ENCODE measurements at regions of chr18 and their contacts with region 1.

Region 1: DNA sequence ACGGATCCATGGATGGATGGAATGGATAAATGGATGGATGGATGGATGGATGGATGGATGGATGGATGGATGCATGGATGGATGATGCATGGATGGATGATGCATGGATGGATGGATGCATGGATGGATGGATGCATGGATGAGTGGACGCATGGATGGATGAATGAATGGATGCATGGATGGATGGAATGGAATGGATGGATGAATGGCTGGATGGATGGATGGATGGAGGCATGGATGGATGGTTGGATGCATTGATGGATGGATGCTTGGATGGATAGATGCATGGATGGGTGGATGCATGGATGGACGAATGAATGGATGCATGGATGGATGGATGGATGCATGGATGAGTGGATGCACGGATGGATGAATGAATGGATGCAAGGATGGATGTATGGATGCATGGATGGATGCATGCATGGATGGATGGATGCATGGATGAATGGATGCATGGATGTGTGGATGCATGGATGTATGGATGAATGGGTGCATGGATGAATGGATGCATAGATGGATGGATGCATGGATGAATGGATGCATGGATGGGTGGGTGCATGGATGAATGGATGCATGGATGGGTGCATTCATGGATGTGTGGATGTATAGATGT is 209.2 kb downstream of the ALPK2 start:
- DNase-seq: no peak
- H3K4me3 ChIP-seq: no peak overlapping the region
- H3K27ac ChIP-seq: no peak overlapping the region
- H3K4me1 ChIP-seq: no peaks in the 10 kb centered on the region
- H3K27me3 ChIP-seq: no peaks in the 10 kb centered on the region
- CTCF ChIP-seq: no peak
- EP300 ChIP-seq: no peak
- POLR2A ChIP-seq: no peak

Region 2: DNA sequence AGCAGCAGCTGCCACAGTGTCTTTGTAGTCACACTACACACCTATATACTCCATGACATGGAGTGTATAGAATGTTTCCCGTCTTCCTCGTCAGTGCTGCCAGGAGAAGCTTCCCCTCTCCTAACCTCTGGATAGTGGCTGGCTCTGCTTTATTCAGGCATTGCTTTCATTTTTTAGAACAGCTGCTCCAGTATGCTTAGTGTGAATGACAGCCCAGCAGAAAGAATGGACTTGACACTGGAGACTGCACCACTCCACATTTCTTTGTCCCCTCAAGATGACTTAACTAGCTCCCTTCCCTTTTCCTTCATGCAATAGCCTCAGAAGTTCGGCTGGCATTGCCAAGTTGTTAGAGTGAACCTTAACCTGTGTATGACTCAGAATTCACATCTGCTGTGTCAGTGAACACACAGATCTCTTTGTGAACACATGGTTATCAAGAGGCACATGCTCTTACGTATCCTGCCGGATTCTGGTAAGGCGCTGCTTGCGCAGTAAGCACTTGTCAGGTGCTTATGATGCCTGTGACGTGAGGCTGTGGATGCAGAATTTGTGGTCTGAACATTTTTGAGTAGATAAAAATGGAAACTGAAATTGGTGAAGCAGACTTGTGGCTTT is 301.8 kb before region 1 on chr18:
- intact Hi-C with region 1: loop called in 1 of 4 experiments (anchors 5 kb)
- DNase-seq: peak; percentile 42 to 63 (median 50)
- H3K4me3 ChIP-seq: no peak overlapping the region
- H3K27ac ChIP-seq: no peak overlapping the region
- H3K4me1 ChIP-seq: peaks cover 1% of the 10 kb centered on the region
- H3K27me3 ChIP-seq: no peaks in the 10 kb centered on the region
- CTCF ChIP-seq: no peak
- EP300 ChIP-seq: no peak
- POLR2A ChIP-seq: no peak

Region 3: DNA sequence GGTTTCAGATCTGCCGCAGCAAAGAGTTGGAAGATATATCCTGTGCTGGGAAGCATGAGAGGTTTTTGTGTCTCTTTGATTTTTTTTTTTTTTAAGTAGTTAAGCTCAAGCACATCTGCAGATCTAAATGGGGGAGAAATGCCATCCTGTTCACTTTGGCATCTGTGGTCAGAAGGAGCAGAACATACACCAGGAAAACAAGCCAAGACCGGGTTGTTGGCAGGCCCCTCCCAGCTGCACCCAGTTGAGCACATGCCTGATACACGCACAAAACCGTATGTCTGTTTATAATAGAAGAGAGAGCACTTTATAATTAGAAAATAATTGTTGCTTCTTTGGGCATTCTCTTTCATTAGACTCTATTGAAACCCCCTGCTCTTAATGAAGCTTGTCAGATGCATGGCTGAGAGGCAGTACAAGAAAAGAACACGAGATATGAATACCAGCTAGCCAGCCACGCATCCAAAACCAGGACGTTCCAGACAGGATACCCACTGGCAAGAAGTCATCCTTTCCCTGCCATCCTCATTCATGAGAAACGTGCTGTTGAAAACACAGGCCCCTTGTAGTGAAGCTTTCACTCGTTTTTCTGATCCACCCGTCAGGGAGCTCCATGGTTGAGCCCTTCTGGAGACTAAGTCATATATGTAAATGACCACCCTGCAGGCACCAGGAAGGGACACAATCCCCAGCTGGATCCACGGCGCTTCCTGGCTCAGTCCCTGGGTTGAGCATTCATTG is 57.0 kb after region 1 on chr18:
- intact Hi-C with region 1: no loop called
- DNase-seq: no peak
- H3K4me3 ChIP-seq: no peak overlapping the region
- H3K27ac ChIP-seq: no peak overlapping the region
- H3K4me1 ChIP-seq: no peaks in the 10 kb centered on the region
- H3K27me3 ChIP-seq: no peaks in the 10 kb centered on the region
- CTCF ChIP-seq: no peak
- EP300 ChIP-seq: no peak
- POLR2A ChIP-seq: no peak